Dendritic cell treated with granulocyte-macrophage colony-stimulating factor and Interleukin-4, amounts not matched to agents 40 ng/mL and 50 ng/mL, for 4 days (primary cell): ENCODE measurements at regions of chr6 and their contacts with region 1.

Region 1: GRCh38 chr6:99520855-99521632 is 5.8 kb upstream of the USP45 start:
- H3K4me3 Mint-ChIP-seq: peak overlapping the region; percentile 99
- H3K27ac Mint-ChIP-seq: peak overlapping the region; percentile 96
- H3K4me1 Mint-ChIP-seq: peaks cover 15% of the 10 kb centered on the region
- H3K27me3 Mint-ChIP-seq: peaks cover 6% of the 10 kb centered on the region

Region 2: GRCh38 chr6:99501762-99502161 is 19.3 kb before region 1 on chr6:
- intact Hi-C with region 1: no loop called
- H3K4me3 Mint-ChIP-seq: no peak overlapping the region
- H3K27ac Mint-ChIP-seq: no peak overlapping the region
- H3K4me1 Mint-ChIP-seq: peaks cover 8% of the 10 kb centered on the region
- H3K27me3 Mint-ChIP-seq: no peaks in the 10 kb centered on the region

Region 3: GRCh38 chr6:99568103-99568933 is 47.3 kb after region 1 on chr6 and contains the start of gene CCNC:
- intact Hi-C with region 1: loop called (anchors 2 kb)
- H3K4me3 Mint-ChIP-seq: peak within 1 kb of the TSS; percentile 90
- H3K27ac Mint-ChIP-seq: peak within 1 kb of the TSS; percentile 93
- H3K4me1 Mint-ChIP-seq: peaks cover 17% of the 10 kb centered on the region
- H3K27me3 Mint-ChIP-seq: no peaks in the 10 kb centered on the region

Region 4: DNA sequence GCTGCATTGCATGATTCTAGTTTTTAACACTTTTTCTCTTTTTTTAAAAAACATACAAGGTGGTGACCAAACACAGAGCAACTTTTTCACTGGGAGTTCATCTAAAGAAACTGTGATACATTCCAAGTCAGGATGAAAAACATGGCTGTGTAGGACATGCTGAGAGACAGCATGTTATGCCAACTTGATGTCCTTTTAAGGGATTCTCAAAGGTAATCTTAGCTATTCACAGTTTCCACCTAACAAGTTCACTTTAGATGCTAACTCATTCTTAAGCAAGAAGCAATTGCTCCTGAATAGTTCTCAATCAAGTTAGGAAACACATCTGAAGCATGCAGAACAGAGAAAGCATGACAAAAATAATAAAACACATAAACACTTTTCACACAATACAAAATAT is 1356.8 kb after region 1 on chr6:
- intact Hi-C with region 1: loop called (anchors 10 kb)
- H3K4me3 Mint-ChIP-seq: no peak overlapping the region
- H3K27ac Mint-ChIP-seq: no peak overlapping the region
- H3K4me1 Mint-ChIP-seq: peaks cover 28% of the 10 kb centered on the region
- H3K27me3 Mint-ChIP-seq: no peaks in the 10 kb centered on the region